Activated CD4-positive, alpha-beta T cell treated with anti-CD3 and anti-CD28 coated beads, Interleukin-2, amount 10 ng/mL, durations not matched to agents 24 days and 14 days (primary cell): ENCODE measurements at regions of chr5 and their contacts with region 1.

Region 1: DNA sequence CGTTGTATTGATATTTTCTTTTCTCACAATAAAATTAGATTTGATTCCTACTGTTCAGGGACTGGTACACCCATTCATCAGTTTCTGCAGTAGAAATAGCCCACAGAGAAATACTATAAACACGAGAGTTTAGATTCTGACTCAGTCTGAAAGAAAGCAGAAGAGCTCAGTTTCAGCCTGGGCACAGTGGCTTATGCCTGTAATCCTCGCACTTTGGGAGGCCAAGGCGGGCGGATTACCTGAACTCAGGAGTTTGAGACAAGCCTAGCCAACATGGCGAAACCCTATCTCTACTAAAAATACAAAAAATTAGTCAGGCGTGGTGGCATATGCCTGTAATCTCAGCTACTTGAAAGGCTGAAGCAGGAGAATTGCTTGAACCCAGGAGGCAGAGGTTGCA is 8.6 kb downstream of the ITK start:
- DNase-seq: peak; percentile 76
- H3K4me3 Mint-ChIP-seq: peak overlapping the region; percentile 83
- H3K27ac Mint-ChIP-seq: peak overlapping the region; percentile 92
- H3K4me1 Mint-ChIP-seq: peaks cover 70% of the 10 kb centered on the region
- H3K27me3 Mint-ChIP-seq: no peaks in the 10 kb centered on the region

Region 2: GRCh38 chr5:157172403-157172802 is 16.8 kb before region 1 on chr5:
- intact Hi-C with region 1: loop called (anchors 2 kb)
- DNase-seq: peak; percentile 95
- H3K4me3 Mint-ChIP-seq: peak overlapping the region; percentile 81
- H3K27ac Mint-ChIP-seq: peak overlapping the region; percentile 96
- H3K4me1 Mint-ChIP-seq: peaks cover 76% of the 10 kb centered on the region
- H3K27me3 Mint-ChIP-seq: no peaks in the 10 kb centered on the region

Region 3: DNA sequence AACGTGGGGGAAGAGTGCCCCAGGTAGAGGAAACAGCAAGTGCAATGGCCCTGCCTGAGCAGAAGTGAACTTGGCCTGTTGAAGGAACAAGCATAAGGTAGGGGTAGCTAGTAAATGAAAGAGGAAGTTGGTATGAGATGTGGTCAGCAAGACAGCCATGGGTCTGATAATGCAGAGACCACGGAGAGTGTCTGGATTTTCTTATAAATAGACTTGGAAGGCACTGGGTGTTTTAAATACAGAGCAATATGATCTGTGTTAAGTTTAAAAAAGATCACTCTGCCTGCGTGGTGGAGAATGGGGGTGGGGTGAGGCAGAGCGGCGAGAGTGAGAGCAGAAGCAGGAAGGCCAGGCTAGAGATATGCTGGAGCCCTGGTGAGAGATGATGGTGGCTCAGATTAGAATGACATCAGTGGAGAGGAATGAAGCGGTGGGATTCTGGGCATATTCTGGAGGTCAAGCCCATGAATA is 382.2 kb after region 1 on chr5:
- intact Hi-C with region 1: no loop called
- DNase-seq: peak; percentile 83
- H3K4me3 Mint-ChIP-seq: peak overlapping the region; percentile 91
- H3K27ac Mint-ChIP-seq: peak overlapping the region; percentile 94
- H3K4me1 Mint-ChIP-seq: peaks cover 62% of the 10 kb centered on the region
- H3K27me3 Mint-ChIP-seq: no peaks in the 10 kb centered on the region